Activated CD8-positive, alpha-beta T cell treated with anti-CD3 and anti-CD28 coated beads, Interleukin-2, amount 10 ng/mL, durations not matched to agents 7 days and 5 days (primary cell): ENCODE measurements at regions of chr18 and their contacts with region 1.

Region 1: GRCh38 chr18:68660354-68661183 is 54.3 kb downstream of the TMX3 start:
- DNase-seq: no peak
- ATAC-seq: no peak
- H3K4me3 Mint-ChIP-seq: no peak overlapping the region
- H3K27ac Mint-ChIP-seq: no peak overlapping the region
- H3K4me1 Mint-ChIP-seq: no peaks in the 10 kb centered on the region
- H3K27me3 Mint-ChIP-seq: peaks cover 4% of the 10 kb centered on the region

Region 2: DNA sequence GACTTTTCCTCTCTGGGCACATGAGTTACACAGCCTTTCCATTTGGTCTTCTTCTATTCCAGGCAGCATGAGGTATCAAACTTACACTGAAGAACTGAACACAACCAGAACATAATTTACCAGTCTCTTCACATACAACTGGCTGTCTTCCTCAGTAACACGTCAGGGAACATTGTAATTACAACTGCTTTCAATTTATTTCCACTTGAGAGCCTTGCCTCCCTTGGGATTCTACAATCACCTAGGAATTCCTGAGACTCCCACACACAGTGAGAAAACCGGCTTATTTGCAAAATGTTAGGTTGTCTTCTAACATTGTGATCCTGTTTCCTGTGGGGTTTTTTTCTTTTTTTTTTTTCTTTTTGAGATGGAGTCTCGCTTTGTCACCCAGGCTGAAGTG is 95.6 kb before region 1 on chr18:
- CTCF ChIA-PET with region 1: no interaction called
- POLR2A ChIA-PET with region 1: no interaction called
- DNase-seq: no peak
- ATAC-seq: no peak
- H3K4me3 Mint-ChIP-seq: no peak overlapping the region
- H3K27ac Mint-ChIP-seq: no peak overlapping the region
- H3K4me1 Mint-ChIP-seq: no peaks in the 10 kb centered on the region
- H3K27me3 Mint-ChIP-seq: no peaks in the 10 kb centered on the region

Region 3: DNA sequence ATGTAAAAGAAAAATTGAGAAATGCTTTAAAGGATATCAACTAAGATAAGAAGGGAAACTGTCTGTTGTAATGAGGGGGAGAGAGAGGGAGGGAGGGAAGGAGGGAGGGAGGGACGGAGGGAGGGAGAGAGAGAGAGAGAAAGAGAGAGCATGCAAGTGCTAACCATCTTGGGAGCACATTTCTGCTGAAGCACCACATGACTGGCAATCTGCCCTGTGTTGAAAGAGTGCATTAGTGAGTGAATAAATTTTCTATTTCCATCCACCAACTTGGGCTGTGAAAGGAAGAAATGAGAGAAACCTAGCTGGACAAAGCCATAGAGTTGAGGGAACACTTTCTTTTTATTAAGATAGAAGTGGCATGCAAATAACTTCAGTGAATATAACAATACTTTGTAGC is 56.3 kb before region 1 on chr18:
- CTCF ChIA-PET with region 1: no interaction called
- POLR2A ChIA-PET with region 1: no interaction called
- DNase-seq: no peak
- ATAC-seq: no peak
- H3K4me3 Mint-ChIP-seq: no peak overlapping the region
- H3K27ac Mint-ChIP-seq: no peak overlapping the region
- H3K4me1 Mint-ChIP-seq: no peaks in the 10 kb centered on the region
- H3K27me3 Mint-ChIP-seq: no peaks in the 10 kb centered on the region

Region 4: GRCh38 chr18:68648191-68648590 is 12.4 kb before region 1 on chr18:
- CTCF ChIA-PET with region 1: no interaction called
- POLR2A ChIA-PET with region 1: no interaction called
- DNase-seq: no peak
- ATAC-seq: no peak
- H3K4me3 Mint-ChIP-seq: no peak overlapping the region
- H3K27ac Mint-ChIP-seq: no peak overlapping the region
- H3K4me1 Mint-ChIP-seq: no peaks in the 10 kb centered on the region
- H3K27me3 Mint-ChIP-seq: peaks cover 10% of the 10 kb centered on the region

Region 5: DNA sequence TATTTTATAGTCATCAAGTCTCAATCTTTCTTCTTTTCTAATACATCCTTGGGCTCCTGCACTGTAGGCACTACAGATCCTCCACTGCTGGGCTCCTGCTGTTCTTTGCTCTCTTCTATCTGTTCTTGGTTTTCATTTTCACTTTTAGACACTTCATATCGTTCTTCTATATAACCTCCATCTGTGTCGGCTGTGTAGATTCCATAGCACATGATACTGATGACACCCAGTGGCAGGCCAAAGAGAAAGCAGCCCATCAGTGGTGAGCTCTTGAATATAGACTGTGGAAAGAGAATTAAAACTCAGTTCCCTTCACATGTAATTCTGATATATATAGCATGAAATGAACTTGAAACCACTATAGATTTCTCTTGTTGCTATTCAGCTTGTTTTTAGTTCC is 16.3 kb after region 1 on chr18:
- CTCF ChIA-PET with region 1: interaction called, 10 read pairs
- POLR2A ChIA-PET with region 1: no interaction called
- DNase-seq: no peak
- ATAC-seq: no peak
- H3K4me3 Mint-ChIP-seq: no peak overlapping the region
- H3K27ac Mint-ChIP-seq: no peak overlapping the region
- H3K4me1 Mint-ChIP-seq: no peaks in the 10 kb centered on the region
- H3K27me3 Mint-ChIP-seq: no peaks in the 10 kb centered on the region